Activated T-helper 1 cell treated with anti-CD3 and anti-CD28 coated beads, Interleukin-12 subunit alpha, Interleukin-12 subunit beta, Interleukin-2, Interleukin-4 antibody, amounts not matched to agents 30 ng/mL and 10 ng/mL and 1 ng/mL, durations not matched to agents 14 hours and 24 hours and 36 hours (primary cell): ENCODE measurements at regions of chr13 and their contacts with region 1.

Region 1: DNA sequence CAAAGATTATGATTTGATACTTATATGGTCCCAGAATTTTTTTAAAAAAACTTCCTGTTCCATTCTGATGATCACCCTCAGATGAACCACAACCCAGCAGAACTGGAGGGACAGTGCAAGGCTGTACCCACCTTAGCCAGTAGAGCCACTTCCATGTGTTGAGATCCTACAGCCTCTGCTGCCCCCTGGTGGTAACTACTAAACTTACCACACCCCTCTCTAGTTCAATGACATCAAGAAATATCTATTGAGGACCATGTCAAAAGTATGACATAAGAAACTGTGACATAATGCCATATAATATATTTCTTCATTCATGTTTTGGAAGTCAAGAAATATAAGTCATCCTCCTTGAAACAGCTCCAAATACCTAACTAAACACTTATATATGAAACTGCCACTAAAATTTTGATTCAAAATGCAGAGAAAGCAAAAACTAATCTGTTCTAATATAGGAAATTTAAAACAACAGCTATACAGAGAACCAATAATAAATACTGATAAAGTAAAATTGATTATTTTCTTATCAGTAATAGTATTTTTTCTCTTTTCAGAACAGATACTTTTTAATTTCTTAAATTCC is 412.6 kb downstream of the KCTD12 start:
- DNase-seq: peak; percentile 50
- H3K4me3 Mint-ChIP-seq: no peak overlapping the region
- H3K27ac Mint-ChIP-seq: no peak overlapping the region
- H3K4me1 Mint-ChIP-seq: no peaks in the 10 kb centered on the region
- H3K27me3 Mint-ChIP-seq: peaks cover 6% of the 10 kb centered on the region

Region 2: DNA sequence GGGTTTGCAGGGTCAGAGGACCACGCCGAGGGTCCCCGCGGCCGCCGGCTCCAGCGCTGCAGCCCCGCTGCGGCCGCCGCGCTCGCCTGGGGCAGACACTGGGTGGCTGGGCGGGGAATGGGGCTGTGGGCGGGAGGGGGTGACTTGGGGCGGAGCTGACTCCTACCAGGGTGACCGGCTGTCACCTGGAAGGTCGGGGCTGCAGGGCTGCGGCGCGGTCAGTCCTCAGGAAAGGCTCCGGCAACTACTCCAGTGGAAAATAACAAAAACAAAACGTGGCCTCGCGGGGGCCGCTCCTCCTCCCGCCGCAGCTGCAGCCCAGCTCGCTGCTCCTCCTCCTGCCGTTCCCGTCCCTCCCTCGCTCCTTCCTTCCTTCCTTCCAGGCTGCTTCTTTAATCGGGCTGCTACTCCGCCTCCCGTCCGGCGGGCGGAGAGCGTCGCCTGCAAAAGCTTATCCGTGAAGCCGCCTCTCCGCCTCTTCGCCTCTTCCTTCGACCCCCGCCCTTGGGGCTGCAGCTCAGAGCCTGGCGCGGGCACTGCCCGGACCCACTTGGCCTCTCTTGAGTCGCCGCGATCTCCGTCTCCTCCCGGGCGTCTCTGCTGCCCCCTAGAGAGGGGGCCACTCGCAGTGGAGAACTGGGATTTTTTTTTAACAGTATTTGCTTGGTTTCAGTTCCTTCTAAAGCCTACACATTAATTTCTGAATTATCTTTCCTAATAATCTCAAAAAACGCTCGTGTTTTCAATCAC is 991.4 kb before region 1 on chr13 and contains the start of gene TBC1D4:
- intact Hi-C with region 1: loop called (anchors 10 kb)
- DNase-seq: peak; percentile 40
- H3K4me3 Mint-ChIP-seq: peak within 1 kb of the TSS; percentile 99
- H3K27ac Mint-ChIP-seq: peak within 1 kb of the TSS; percentile 89
- H3K4me1 Mint-ChIP-seq: peaks cover 45% of the 10 kb centered on the region
- H3K27me3 Mint-ChIP-seq: peaks cover 49% of the 10 kb centered on the region
- total RNA-seq, gene TBC1D4: 66.6 and 73.5 TPM in 2 replicates

Region 3: GRCh38 chr13:75587679-75588078 is 886.0 kb before region 1 on chr13:
- intact Hi-C with region 1: no loop called
- DNase-seq: no peak
- H3K4me3 Mint-ChIP-seq: no peak overlapping the region
- H3K27ac Mint-ChIP-seq: no peak overlapping the region
- H3K4me1 Mint-ChIP-seq: no peaks in the 10 kb centered on the region
- H3K27me3 Mint-ChIP-seq: no peaks in the 10 kb centered on the region

Region 4: GRCh38 chr13:75694722-75695121 is 778.9 kb before region 1 on chr13:
- intact Hi-C with region 1: loop called (anchors 1 kb)
- DNase-seq: no peak
- H3K4me3 Mint-ChIP-seq: no peak overlapping the region
- H3K27ac Mint-ChIP-seq: no peak overlapping the region
- H3K4me1 Mint-ChIP-seq: no peaks in the 10 kb centered on the region
- H3K27me3 Mint-ChIP-seq: peaks cover 3% of the 10 kb centered on the region

Region 5: GRCh38 chr13:75876360-75877050 is 597.1 kb before region 1 on chr13:
- intact Hi-C with region 1: loop called (anchors 1 kb)
- DNase-seq: peak; percentile 27
- H3K4me3 Mint-ChIP-seq: no peak overlapping the region
- H3K27ac Mint-ChIP-seq: no peak overlapping the region
- H3K4me1 Mint-ChIP-seq: peaks cover 17% of the 10 kb centered on the region
- H3K27me3 Mint-ChIP-seq: peaks cover 8% of the 10 kb centered on the region

Region 6: GRCh38 chr13:76397413-76397812 is 76.2 kb before region 1 on chr13:
- intact Hi-C with region 1: no loop called
- DNase-seq: no peak
- H3K4me3 Mint-ChIP-seq: no peak overlapping the region
- H3K27ac Mint-ChIP-seq: no peak overlapping the region
- H3K4me1 Mint-ChIP-seq: peaks cover 6% of the 10 kb centered on the region
- H3K27me3 Mint-ChIP-seq: no peaks in the 10 kb centered on the region

Region 7: GRCh38 chr13:76489274-76489673 is 15.6 kb after region 1 on chr13:
- intact Hi-C with region 1: no loop called
- DNase-seq: no peak
- H3K4me3 Mint-ChIP-seq: no peak overlapping the region
- H3K27ac Mint-ChIP-seq: no peak overlapping the region
- H3K4me1 Mint-ChIP-seq: no peaks in the 10 kb centered on the region
- H3K27me3 Mint-ChIP-seq: no peaks in the 10 kb centered on the region

Region 8: GRCh38 chr13:76538004-76538403 is 64.4 kb after region 1 on chr13:
- intact Hi-C with region 1: no loop called
- DNase-seq: no peak
- H3K4me3 Mint-ChIP-seq: no peak overlapping the region
- H3K27ac Mint-ChIP-seq: no peak overlapping the region
- H3K4me1 Mint-ChIP-seq: no peaks in the 10 kb centered on the region
- H3K27me3 Mint-ChIP-seq: no peaks in the 10 kb centered on the region